Esophagus muscularis mucosa (tissue), 4 donors: ENCODE measurements at regions of chr6 and their contacts with region 1.

Region 1: GRCh38 chr6:42459888-42460287 is 8.2 kb upstream of the TRERF1 start:
- DNase-seq: no peak
- H3K4me3 ChIP-seq: no peak overlapping the region
- H3K27ac ChIP-seq: no peak overlapping the region
- H3K4me1 ChIP-seq: no peaks in the 10 kb centered on the region
- H3K27me3 ChIP-seq: no peaks in the 10 kb centered on the region
- CTCF ChIP-seq: no peak
- EP300 ChIP-seq: no peak
- POLR2A ChIP-seq: no peak

Region 2: DNA sequence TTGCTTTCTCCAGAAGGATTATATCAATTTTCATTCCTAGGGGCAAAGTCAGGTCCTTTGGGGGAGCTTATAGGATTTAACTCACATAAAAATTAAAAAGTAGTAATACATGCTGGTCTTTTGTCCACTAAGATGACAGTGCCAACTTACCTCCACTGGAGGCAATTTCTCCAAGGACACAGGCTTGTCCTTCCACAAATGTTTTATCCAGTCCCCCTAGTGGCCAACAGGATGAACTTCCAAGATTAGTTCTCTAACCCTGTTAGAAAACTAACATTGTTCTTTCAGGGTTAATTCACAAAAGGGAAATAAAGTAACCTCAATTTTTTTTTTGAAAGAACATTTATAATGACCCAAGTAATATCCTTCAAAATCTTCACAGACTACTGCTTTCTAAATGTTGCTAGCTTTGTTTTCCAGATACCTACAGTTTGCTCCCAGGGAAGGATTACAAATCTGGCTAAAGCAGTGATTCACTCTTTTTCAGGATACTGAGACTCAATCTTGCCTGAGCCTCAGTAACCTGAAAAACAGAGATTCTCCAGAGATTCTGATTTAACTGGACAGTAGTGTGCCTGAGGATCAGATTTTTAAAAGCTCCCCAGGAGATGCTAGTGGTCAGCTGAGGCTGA is 72.3 kb after region 1 on chr6:
- intact Hi-C with region 1: loop called (anchors 5 kb)
- DNase-seq: no peak
- H3K4me3 ChIP-seq: no peak overlapping the region
- H3K27ac ChIP-seq: no peak overlapping the region
- H3K4me1 ChIP-seq: no peaks in the 10 kb centered on the region
- H3K27me3 ChIP-seq: no peaks in the 10 kb centered on the region
- CTCF ChIP-seq: peak; percentile 82 to 90 (median 86)
- EP300 ChIP-seq: no peak
- POLR2A ChIP-seq: no peak